Aorta (tissue), 5 donors: ENCODE measurements at regions of chr3 and their contacts with region 1.

Region 1: DNA sequence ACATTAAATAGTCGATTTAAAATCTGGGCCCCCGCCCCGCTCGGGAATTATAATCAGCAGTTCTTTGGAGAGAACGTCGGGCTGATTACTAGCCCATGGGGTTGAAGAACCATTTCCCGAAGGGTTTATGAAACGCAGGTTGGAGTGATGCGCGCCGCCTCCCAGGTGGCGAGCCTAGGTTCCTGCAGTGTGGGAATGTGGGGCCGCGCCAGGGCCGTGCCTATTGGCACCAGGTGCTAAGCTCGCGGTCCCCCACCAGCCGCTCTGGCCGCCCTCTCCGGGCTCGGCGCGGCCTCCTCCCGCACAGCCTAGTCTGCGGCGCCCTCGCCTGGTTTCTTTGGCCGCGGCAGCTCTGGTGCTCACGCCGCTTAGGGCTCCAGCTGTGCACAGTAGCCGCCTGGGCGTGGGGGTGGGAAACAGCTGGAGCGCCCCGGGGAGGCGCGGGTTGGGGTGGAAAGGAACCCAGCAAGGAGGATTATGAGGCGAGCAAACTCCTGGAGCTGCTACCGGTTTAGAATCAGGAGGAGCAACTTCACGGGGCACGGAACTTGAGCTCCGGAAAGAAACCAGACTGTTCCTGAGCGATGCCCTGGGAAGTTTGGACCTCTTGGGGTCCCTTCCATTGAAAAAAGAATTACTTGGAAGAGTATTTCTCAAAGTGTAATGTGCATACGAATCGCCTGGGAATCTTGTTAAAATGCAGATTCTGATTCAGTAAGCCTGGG is 5.6 kb upstream of the MECOM start:
- DNase-seq: peak; percentile 82 to 94
- ATAC-seq: peak; percentile 96
- H3K4me3 ChIP-seq: peak overlapping the region; percentile 31 to 64
- H3K27ac ChIP-seq: peak overlapping the region in 1 of 2 donors; percentile 24
- H3K4me1 ChIP-seq: no peaks in the 10 kb centered on the region
- H3K27me3 ChIP-seq: no peaks in the 10 kb centered on the region

Region 2: DNA sequence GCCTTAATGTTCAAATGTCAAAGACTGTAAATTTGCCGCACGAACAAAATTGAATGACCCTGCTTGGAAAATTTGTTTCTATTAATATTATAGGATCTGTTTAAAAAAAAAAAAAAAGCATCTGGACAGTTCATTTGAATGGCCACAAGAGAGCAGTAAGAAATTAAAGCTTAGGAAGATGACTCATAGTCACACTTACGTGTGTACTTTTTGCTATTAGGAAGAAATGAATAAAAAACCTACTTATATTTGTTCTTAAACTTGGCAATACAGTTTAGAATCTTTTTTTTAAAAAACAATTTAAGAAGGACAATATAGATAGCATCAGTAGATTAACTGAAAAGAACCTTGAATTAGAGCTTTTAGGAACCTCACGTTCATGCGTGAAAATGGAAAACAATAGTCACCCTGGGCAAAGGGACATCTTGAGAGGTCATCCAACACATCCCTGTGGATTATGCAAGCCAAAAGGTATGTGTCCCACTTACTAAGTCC is 627.4 kb before region 1 on chr3:
- intact Hi-C with region 1: loop called in 1 of 2 experiments (anchors 5 kb)
- DNase-seq: no peak
- ATAC-seq: peak; percentile 79
- H3K4me3 ChIP-seq: no peak overlapping the region
- H3K27ac ChIP-seq: no peak overlapping the region
- H3K4me1 ChIP-seq: no peaks in the 10 kb centered on the region
- H3K27me3 ChIP-seq: no peaks in the 10 kb centered on the region

Region 3: GRCh38 chr3:169227911-169228310 is 441.2 kb before region 1 on chr3:
- intact Hi-C with region 1: loop called (anchors 5 to 10 kb)
- DNase-seq: no peak
- ATAC-seq: peak; percentile 51
- H3K4me3 ChIP-seq: peak overlapping the region in 1 of 2 donors; percentile 21
- H3K27ac ChIP-seq: peak overlapping the region; percentile 39 to 67
- H3K4me1 ChIP-seq: peaks cover 0 to 14% of the 10 kb centered on the region in 2 donors
- H3K27me3 ChIP-seq: no peaks in the 10 kb centered on the region

Region 4: GRCh38 chr3:169552533-169552932 is 116.6 kb before region 1 on chr3:
- intact Hi-C with region 1: loop called in 1 of 2 experiments (anchors 10 kb)
- DNase-seq: no peak
- ATAC-seq: no peak
- H3K4me3 ChIP-seq: no peak overlapping the region
- H3K27ac ChIP-seq: no peak overlapping the region
- H3K4me1 ChIP-seq: peaks cover 4 to 14% of the 10 kb centered on the region in 2 donors
- H3K27me3 ChIP-seq: no peaks in the 10 kb centered on the region

Region 5: DNA sequence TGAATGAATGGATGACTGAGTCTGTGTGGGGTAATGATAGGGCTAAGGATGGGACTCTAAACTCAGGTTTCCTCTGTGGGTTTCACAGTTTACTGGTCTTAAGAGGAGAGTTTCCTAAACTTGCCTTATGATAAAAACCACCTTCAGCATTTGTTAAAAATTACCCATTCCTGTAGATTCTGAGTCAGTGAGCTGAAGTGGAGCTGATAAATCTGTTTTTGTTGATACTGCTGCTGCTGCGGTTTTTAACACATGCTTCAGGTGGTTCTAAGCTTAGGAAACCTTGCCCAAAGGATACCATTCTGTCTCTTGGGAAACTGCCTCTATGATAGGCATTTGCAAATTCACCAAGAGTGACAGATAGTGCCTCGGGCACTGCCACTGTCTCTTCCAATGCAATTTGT is 58.2 kb before region 1 on chr3:
- intact Hi-C with region 1: no loop called
- DNase-seq: no peak
- ATAC-seq: no peak
- H3K4me3 ChIP-seq: no peak overlapping the region
- H3K27ac ChIP-seq: no peak overlapping the region
- H3K4me1 ChIP-seq: peaks cover 0 to 3% of the 10 kb centered on the region in 2 donors
- H3K27me3 ChIP-seq: no peaks in the 10 kb centered on the region